ENCODE measurements at regions of chr16 and their contacts with region 1.

Region 1: DNA sequence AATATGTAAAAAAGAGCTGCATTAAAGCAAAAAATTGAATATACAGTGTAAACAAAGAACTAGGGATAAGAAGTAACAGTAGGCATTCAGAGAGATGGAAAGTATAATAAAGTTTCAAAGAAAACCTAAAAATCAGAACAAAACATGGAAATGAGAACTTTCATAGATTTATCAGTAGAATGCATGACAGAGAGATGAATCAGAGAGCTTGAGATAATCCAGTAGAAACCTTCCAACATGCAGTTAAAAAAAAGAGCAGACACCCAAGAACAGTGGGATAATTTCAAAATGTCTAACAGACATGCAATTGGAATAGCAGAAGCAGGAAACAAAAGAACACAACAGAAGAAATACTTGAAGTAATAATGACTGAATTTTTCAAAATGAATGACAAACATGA is 1384.2 kb downstream of the CDH11 start:
- DNase-seq: no peak
- ATAC-seq: no peak

Region 2: DNA sequence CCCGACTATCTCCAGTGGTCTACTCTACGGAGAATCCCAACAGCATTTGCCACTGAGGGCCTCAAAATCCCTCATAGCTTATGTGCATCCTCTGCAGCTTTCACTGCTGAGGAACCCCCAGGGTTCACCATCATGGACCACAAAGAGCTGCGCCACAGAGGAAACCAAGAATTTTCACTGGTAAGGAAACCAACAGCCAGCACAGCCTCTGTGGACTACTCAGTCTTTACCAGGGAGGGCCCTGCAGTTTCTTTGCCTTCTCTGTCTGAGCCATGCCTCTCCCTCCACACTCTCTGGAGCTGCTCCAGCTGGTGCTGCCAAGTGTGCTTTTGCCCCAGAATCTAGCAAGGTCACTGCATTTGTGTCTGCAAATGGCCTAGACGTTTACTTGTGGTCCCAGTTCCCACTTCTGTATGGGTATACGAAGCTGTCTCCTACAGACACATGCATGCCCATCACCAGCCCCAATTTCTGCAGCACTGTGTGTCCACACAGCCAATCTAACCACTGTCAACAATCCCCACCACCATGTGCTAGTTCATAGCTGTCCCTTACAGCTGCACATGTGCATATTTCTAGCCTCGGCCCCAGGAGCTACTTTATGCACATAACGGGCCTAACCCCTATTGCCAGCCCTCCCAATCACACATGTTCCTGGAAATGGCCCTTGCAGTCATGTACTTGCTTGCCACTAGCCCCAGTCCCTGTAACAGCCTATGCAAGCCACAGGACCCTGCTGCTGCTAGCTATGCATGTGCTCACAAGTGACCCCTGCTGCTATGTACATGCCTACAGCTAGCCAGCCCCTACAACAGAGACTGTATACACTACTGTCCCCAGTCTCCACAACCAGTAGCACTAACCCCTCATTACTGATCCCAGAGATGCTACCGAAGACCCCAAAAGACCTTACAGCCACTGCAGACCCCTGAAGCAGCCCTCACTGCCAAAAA is 53.2 kb before region 1 on chr16:
- intact Hi-C with region 1: loop called (anchors 2 kb)
- DNase-seq: no peak
- ATAC-seq: no peak

Measured in left ventricle myocardium superior (tissue), 1 donor.